ENCODE measurements at regions of chr12 and their contacts with region 1.

Region 1: DNA sequence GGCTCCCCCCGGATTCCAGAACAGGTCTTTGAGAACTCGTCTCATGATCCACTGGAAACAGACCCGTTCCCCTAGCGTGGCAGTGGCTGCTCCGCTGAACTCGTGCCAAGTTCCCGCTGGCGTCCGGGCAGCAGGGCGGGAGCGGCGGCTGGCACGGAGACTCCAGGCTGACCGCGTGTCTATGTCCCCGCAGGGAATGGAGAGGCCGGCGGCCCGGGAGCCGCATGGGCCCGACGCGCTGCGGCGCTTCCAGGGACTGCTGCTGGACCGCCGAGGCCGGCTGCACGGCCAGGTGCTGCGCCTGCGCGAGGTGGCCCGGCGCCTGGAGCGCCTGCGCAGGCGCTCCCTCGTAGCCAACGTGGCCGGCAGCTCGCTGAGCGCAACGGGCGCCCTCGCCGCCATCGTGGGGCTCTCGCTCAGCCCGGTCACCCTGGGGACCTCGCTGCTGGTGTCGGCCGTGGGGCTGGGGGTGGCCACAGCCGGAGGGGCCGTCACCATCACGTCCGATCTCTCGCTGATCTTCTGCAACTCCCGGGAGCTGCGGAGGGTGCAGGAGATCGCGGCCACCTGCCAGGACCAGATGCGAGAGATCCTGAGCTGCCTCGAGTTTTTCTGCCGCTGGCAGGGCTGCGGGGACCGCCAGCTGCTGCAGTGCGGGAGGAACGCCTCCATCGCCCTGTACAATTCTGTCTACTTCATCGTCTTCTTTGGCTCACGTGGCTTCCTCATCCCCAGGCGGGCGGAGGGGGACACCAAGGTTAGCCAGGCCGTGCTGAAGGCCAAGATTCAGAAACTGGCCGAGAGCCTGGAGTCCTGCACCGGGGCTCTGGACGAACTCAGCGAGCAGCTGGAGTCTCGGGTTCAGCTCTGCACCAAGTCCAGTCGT is 1.5 kb downstream of the APOLD1 start:
- DNase-seq: peak; percentile 81 to 92
- ATAC-seq: peak; percentile 95 to 97 (median 96)
- H3K4me3 ChIP-seq: peak overlapping the region; percentile 92
- H3K27ac ChIP-seq: peak overlapping the region; percentile 95
- H3K4me1 ChIP-seq: peaks cover 18% of the 10 kb centered on the region
- H3K27me3 ChIP-seq: no peaks in the 10 kb centered on the region
- CTCF ChIP-seq: no peak

Region 2: DNA sequence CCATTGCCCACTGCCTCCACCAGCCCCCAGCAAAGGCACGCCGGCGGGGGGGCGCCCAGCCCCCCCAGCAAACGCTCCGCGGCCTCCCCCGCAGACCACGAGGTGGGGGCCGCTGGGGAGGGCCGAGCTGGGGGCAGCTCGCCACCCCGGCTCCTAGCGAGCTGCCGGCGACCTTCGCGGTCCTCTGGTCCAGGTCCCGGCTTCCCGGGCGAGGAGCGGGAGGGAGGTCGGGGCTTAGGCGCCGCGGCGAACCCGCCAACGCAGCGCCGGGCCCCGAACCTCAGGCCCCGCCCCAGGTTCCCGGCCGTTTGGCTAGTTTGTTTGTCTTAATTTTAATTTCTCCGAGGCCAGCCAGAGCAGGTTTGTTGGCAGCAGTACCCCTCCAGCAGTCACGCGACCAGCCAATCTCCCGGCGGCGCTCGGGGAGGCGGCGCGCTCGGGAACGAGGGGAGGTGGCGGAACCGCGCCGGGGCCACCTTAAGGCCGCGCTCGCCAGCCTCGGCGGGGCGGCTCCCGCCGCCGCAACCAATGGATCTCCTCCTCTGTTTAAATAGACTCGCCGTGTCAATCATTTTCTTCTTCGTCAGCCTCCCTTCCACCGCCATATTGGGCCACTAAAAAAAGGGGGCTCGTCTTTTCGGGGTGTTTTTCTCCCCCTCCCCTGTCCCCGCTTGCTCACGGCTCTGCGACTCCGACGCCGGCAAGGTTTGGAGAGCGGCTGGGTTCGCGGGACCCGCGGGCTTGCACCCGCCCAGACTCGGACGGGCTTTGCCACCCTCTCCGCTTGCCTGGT is 70.0 kb before region 1 on chr12 and contains the start of gene CDKN1B:
- intact Hi-C with region 1: loop called in 1 of 2 experiments (anchors 5 kb)
- DNase-seq: peak; percentile 91 to 96
- ATAC-seq: peak; percentile 95 to 97 (median 96)
- H3K4me3 ChIP-seq: peak within 1 kb of the TSS; percentile 84
- H3K27ac ChIP-seq: peak within 1 kb of the TSS; percentile 98
- H3K4me1 ChIP-seq: peaks cover 48% of the 10 kb centered on the region
- H3K27me3 ChIP-seq: no peaks in the 10 kb centered on the region
- CTCF ChIP-seq: no peak
- total RNA-seq, gene CDKN1B: 32.2 to 61.0 (median 38.0) TPM

Region 3: GRCh38 chr12:12724661-12725545 is 62.1 kb before region 1 on chr12:
- intact Hi-C with region 1: loop called in 1 of 2 experiments (anchors 2 kb)
- DNase-seq: peak; percentile 94 to 95
- ATAC-seq: peak; percentile 85 to 90 (median 86)
- H3K4me3 ChIP-seq: peak overlapping the region; percentile 84
- H3K27ac ChIP-seq: peak overlapping the region; percentile 93
- H3K4me1 ChIP-seq: peaks cover 35% of the 10 kb centered on the region
- H3K27me3 ChIP-seq: no peaks in the 10 kb centered on the region
- CTCF ChIP-seq: no peak

Region 4: DNA sequence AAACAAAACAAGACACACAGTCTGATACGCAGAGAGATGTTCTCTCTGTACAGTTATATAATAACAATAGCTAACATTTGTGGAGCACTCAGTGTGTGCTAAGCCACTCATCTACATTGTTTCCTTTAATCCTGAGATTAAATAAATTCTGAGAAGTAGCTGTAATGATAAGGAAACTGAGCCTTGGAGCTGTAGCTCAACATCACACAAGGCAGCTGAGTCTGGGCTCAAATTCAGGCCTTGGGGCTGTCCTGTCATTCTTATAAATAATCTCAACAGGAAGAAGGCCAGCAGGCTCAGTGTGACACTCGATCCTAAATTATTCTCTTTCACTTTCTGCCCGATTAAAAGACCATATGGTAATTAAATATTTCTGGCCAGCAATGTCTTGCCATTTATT is 45.3 kb before region 1 on chr12:
- intact Hi-C with region 1: loop called in 1 of 2 experiments (anchors 5 kb)
- DNase-seq: no peak
- ATAC-seq: no peak
- H3K4me3 ChIP-seq: peak overlapping the region; percentile 2
- H3K27ac ChIP-seq: peak overlapping the region; percentile 62
- H3K4me1 ChIP-seq: no peaks in the 10 kb centered on the region
- H3K27me3 ChIP-seq: no peaks in the 10 kb centered on the region
- CTCF ChIP-seq: no peak

Region 5: GRCh38 chr12:12983420-12984035 is 196.6 kb after region 1 on chr12:
- intact Hi-C with region 1: loop called in 1 of 2 experiments (anchors 10 kb)
- DNase-seq: no peak
- ATAC-seq: peak; percentile 59 to 88 (median 65)
- H3K4me3 ChIP-seq: no peak overlapping the region
- H3K27ac ChIP-seq: no peak overlapping the region
- H3K4me1 ChIP-seq: no peaks in the 10 kb centered on the region
- H3K27me3 ChIP-seq: no peaks in the 10 kb centered on the region
- CTCF ChIP-seq: peak; percentile 56

Region 6: GRCh38 chr12:14365294-14366208 is 1578.6 kb after region 1 on chr12 and contains the start of gene ATF7IP:
- intact Hi-C with region 1: loop called in 1 of 2 experiments (anchors 5 kb)
- DNase-seq: peak; percentile 95 to 98
- ATAC-seq: peak; percentile 96 to 98 (median 97)
- H3K4me3 ChIP-seq: peak within 1 kb of the TSS; percentile 81
- H3K27ac ChIP-seq: peak within 1 kb of the TSS; percentile 97
- H3K4me1 ChIP-seq: peaks cover 5% of the 10 kb centered on the region
- H3K27me3 ChIP-seq: no peaks in the 10 kb centered on the region
- CTCF ChIP-seq: no peak
- total RNA-seq, gene ATF7IP: 28.5 to 56.3 (median 37.9) TPM

Measured in psoas muscle (tissue), 8 donors.